Naive thymus-derived CD4-positive, alpha-beta T cell (primary cell): ENCODE measurements at regions of chr19 and their contacts with region 1.

Region 1: DNA sequence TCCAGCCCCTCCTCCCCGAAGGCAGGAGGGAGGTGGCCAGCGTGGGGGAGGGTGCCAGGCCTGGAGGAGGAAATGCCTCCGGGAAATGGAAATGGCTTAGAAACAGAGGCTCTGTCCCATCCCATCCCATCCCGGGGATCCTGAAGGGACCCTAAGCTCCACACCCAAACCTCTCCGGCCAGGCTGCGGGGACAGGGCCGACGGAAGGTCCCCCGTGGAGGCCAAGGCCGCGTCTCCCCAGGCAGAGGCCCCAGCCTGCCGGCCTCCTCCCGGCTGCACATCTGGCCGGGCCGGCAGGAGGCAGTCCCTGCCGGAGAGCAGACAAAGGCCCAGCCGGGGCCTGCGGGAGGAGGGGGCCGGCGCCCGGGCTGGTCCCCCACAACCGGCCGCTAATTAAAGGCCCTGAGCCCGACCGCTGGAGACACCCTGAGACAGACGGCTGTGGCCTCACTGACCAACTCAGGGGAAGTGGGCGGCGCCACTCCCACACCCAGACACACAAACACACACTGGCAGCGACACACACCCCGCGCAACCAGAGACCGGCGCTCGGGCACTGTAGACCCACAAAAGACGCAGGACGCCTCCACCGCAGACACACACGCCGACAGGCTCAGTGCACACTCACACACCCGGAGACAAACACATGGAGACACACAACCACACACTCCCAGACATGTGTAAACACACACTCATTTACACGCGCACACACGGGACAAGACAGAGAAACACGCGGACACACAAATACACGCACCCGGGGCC is 1.1 kb downstream of the ADAMTS10 start:
- DNase-seq: peak in 2 of 9 donors; percentile 22 to 24
- ATAC-seq: peak; percentile 29
- H3K4me3 ChIP-seq: peak overlapping the region; percentile 69
- H3K4me3 Mint-ChIP-seq: peak overlapping the region; percentile 90 to 100 (median 98)
- H3K27ac ChIP-seq: peak overlapping the region; percentile 67
- H3K27ac Mint-ChIP-seq: peak overlapping the region; percentile 37 to 97 (median 90)
- H3K4me1 ChIP-seq: peaks cover 5 to 18% of the 10 kb centered on the region in 2 donors
- H3K4me1 Mint-ChIP-seq: peaks cover 13 to 52% (median 40%) of the 10 kb centered on the region in 7 donors
- H3K27me3 ChIP-seq: no peaks in the 10 kb centered on the region
- H3K27me3 Mint-ChIP-seq: peaks cover 0 to 25% (median 0%) of the 10 kb centered on the region in 5 donors

Region 2: DNA sequence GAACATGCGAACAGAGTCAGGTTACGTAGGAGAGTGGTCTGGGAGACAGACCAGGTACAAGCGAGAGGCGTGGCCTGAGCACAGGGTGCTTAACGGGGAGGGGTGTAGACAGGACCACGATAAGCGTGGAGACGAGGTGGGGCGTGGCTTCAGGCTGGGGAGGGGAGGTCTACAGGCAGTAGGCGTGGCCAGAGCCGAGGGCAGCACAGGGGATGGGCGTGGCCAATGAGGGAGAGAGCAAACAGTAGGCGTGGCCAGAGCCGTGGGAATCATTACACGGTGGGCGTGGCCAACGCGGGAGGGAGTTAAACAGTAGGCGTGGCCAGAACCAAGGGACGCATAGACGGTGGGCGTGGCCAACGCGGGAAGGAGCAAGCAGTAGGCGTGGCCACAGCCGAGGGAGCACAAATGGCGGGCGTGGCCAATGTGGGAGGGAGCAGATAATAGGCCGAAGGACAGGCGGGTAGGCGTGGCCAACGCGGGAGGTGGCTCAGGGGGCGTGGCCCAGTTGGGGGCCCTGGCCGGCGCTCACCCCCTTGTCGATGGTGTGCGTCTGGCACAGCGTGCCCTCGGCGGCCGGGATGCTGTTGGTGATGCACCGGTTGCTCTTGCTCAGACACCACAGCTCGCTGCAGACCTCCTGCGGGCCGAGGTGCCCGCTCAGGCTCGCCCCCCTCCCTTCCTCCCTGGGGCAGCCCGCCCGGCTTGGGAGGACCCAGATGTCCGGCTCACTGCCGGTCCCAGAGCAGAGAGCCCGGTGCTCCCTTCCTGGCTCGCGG is 17.0 kb before region 1 on chr19:
- CTCF ChIA-PET with region 1: interaction called, 11 read pairs
- POLR2A ChIA-PET with region 1: interaction called, 4 read pairs
- intact Hi-C with region 1: loop called in 1 of 2 experiments (anchors 1 kb)
- DNase-seq: peak; percentile 80 to 98 (median 96)
- ATAC-seq: peak; percentile 93
- H3K4me3 ChIP-seq: peak overlapping the region; percentile 81
- H3K4me3 Mint-ChIP-seq: peak overlapping the region; percentile 81 to 95 (median 88)
- H3K27ac ChIP-seq: peak overlapping the region; percentile 63
- H3K27ac Mint-ChIP-seq: peak overlapping the region; percentile 17 to 89 (median 76)
- H3K4me1 ChIP-seq: peaks cover 5 to 15% of the 10 kb centered on the region in 2 donors
- H3K4me1 Mint-ChIP-seq: peaks cover 6 to 37% (median 29%) of the 10 kb centered on the region in 7 donors
- H3K27me3 ChIP-seq: no peaks in the 10 kb centered on the region
- H3K27me3 Mint-ChIP-seq: peaks cover 0 to 29% (median 0%) of the 10 kb centered on the region in 5 donors

Region 3: GRCh38 chr19:9321338-9321737 is 711.9 kb after region 1 on chr19:
- CTCF ChIA-PET with region 1: no interaction called
- POLR2A ChIA-PET with region 1: no interaction called
- intact Hi-C with region 1: no loop called
- DNase-seq: no peak
- ATAC-seq: no peak
- H3K4me3 ChIP-seq: no peak overlapping the region
- H3K4me3 Mint-ChIP-seq: no peak overlapping the region
- H3K27ac ChIP-seq: no peak overlapping the region
- H3K27ac Mint-ChIP-seq: no peak overlapping the region
- H3K4me1 ChIP-seq: peaks cover 0 to 10% of the 10 kb centered on the region in 2 donors
- H3K4me1 Mint-ChIP-seq: peaks cover 6 to 39% (median 23%) of the 10 kb centered on the region in 7 donors
- H3K27me3 ChIP-seq: no peaks in the 10 kb centered on the region
- H3K27me3 Mint-ChIP-seq: peaks cover 0 to 2% (median 0%) of the 10 kb centered on the region in 5 donors